Activated CD4-positive, alpha-beta T cell treated with anti-CD3 and anti-CD28 coated beads, Interleukin-2, amount 10 ng/mL, durations not matched to agents 24 days and 14 days (primary cell): ENCODE measurements at regions of chr3 and their contacts with region 1.

Region 1: DNA sequence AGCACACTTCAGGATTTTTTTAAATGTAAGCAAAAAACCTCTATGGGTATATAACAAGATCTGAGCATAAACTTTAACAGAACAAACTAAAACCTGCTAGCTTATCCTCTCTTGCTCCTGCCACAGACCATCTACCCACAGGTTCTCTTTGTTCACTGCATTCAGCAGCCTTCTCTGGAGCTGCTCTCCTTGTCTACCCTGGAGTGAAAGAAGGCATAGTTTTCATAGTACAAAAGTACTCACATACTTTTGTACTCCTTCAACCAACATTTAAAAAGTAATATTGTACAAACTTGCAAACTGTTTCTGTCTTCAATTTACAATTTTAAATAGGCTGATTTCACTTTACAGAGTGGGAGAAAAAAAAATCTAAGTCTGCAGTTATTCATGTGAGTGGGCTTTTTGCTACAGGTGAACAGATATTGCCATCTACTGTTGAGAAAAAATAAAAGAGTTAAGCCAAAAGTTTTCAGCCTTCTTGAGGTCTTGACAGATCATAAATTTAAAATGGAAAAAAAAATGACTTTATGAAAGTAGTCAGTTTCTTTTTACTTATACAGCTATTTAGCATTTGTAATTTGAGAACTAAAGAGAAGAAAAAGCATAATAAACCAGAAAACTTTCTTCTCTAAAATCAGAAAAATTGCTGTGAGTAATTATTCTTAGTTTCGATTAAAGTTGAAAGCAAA is 20.4 kb downstream of the TERC start:
- DNase-seq: no peak
- H3K4me3 Mint-ChIP-seq: no peak overlapping the region
- H3K27ac Mint-ChIP-seq: no peak overlapping the region
- H3K4me1 Mint-ChIP-seq: peaks cover 7% of the 10 kb centered on the region
- H3K27me3 Mint-ChIP-seq: peaks cover 22% of the 10 kb centered on the region

Region 2: GRCh38 chr3:168865022-168865551 is 879.4 kb before region 1 on chr3:
- intact Hi-C with region 1: loop called (anchors 10 kb)
- DNase-seq: no peak
- H3K4me3 Mint-ChIP-seq: no peak overlapping the region
- H3K27ac Mint-ChIP-seq: no peak overlapping the region
- H3K4me1 Mint-ChIP-seq: no peaks in the 10 kb centered on the region
- H3K27me3 Mint-ChIP-seq: no peaks in the 10 kb centered on the region

Region 3: DNA sequence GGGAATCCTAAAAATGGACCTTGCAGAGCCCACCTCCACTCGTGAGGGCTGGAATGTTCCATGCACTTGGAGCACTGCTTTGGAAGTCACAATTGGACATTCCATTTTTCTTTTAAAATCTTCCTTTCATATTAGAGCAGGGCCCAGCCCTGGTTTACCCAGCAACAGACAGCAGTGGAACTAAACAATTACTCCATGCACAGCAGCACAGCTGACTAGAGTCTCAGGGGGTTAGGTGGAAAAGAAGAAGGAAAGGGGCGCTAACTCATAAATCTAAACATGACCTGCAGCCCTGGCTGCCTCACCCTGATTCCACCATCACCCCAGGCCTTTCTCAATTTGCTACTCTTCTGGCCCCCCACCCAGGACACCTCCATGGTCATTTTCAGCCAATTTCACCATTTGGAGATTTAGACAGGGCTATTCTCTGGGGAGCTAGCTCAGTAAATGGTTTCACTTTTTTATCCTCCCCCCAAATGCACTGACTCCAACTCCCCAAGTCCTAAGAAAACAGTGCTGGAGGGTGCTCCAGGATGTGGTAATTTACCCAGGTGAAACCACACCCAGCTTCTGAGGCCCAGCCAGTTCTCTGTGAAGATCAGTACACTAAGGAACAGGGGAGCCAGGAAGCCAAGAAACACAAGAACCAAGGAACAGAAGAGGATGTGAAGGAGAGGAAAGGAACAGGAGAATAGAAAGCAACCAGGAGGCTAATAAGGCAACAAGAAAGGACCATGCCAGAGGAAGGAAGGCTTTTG is 126.8 kb after region 1 on chr3:
- intact Hi-C with region 1: no loop called
- DNase-seq: peak; percentile 74
- H3K4me3 Mint-ChIP-seq: peak overlapping the region; percentile 13
- H3K27ac Mint-ChIP-seq: peak overlapping the region; percentile 1
- H3K4me1 Mint-ChIP-seq: peaks cover 20% of the 10 kb centered on the region
- H3K27me3 Mint-ChIP-seq: peaks cover 4% of the 10 kb centered on the region